ENCODE measurements at regions of chr9 and their contacts with region 1.

Region 1: DNA sequence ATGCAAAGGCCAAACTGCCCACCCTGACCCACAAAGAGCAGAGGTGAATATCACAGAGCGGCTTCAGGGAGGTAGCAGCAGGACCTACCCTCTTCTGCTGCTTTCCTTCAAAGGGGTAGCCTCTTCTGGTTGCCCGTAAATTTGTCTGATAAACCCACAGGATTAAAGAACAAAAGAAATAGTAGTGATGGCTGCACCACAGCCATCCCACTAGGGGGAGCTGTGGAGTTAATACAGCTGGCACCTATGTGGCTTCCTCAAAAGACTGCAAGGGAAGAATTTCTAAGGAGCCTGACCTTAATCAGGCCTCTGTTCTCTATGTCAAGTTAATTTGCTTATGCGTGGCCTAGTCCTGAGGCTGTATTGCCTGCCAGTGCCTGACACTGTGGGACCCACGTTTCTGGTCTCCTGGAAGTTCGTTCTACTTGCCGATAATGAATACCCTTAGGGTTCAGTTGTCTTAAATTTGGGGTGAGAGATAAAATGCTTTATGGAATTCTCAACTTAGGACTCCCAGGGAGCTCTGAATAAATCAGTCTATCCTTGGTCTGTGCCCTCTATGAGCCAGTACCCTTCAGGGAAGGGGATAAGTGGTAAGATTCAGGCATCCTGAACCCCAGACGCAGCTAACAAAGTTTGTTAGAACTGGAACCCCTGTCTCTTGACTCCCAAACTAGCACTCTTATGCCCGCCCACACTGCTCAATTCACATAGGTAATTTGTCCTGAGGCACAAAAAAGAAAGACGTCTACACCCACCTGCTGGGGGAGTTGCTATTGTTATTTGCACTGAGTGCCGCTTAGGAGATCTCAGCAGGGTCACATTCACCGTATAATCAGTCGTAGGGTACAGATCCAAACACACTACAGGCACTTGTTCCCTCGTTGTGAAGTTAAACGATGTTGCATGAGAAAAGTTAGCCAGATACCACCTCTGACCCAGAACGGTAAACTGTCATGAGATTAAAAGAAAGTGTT is 77.1 kb downstream of the SUSD1 start:
- DNase-seq: peak; percentile 65 to 83 (median 71)
- ATAC-seq: peak; percentile 77
- H3K4me3 ChIP-seq: no peak overlapping the region
- H3K27ac ChIP-seq: no peak overlapping the region
- H3K4me1 ChIP-seq: peaks cover 8 to 33% of the 10 kb centered on the region in 2 experiments; a peak in 4 of 5 replicates
- H3K27me3 ChIP-seq: no peaks in the 10 kb centered on the region
- CTCF ChIP-seq: peak; percentile 80 to 90 (median 82)
- EP300 ChIP-seq: no peak
- POLR2A ChIP-seq: no peak
- RAD21 ChIP-seq: peak; percentile 61 to 76

Region 2: GRCh38 chr9:112037281-112038016 is 60.6 kb before region 1 on chr9:
- CTCF ChIA-PET with region 1: no interaction called
- POLR2A ChIA-PET with region 1: no interaction called
- in situ Hi-C with region 1: no loop called
- intact Hi-C with region 1: no loop called
- DNase-seq: no peak
- ATAC-seq: no peak
- H3K4me3 ChIP-seq: no peak overlapping the region
- H3K27ac ChIP-seq: 0 out of 3 replicates have a peak overlapping the region, but pooled peaks have one; percentile 29
- H3K4me1 ChIP-seq: peaks cover 7 to 11% of the 10 kb centered on the region in 2 experiments; a peak in 3 of 5 replicates
- H3K27me3 ChIP-seq: no peaks in the 10 kb centered on the region
- CTCF ChIP-seq: no peak
- EP300 ChIP-seq: no peak
- POLR2A ChIP-seq: no peak
- RAD21 ChIP-seq: no peak

Region 3: GRCh38 chr9:112174218-112174964 is 76.4 kb after region 1 on chr9:
- CTCF ChIA-PET with region 1: no interaction called
- POLR2A ChIA-PET with region 1: interaction called, 3 read pairs
- in situ Hi-C with region 1: no loop called
- intact Hi-C with region 1: loop called (anchors 5 kb)
- DNase-seq: peak; percentile 86 to 93 (median 90)
- ATAC-seq: peak; percentile 80
- H3K4me3 ChIP-seq: peak overlapping the region; percentile 60
- H3K27ac ChIP-seq: peak overlapping the region; percentile 99
- H3K4me1 ChIP-seq: peaks cover 54 to 70% of the 10 kb centered on the region in 2 experiments
- H3K27me3 ChIP-seq: no peaks in the 10 kb centered on the region
- CTCF ChIP-seq: no peak
- EP300 ChIP-seq: 0 out of 2 replicates have a peak, but pooled peaks have one; percentile 23
- POLR2A ChIP-seq: peak; percentile 54; the same call in 1 of the 2 replicates
- RAD21 ChIP-seq: no peak

Region 4: GRCh38 chr9:112224401-112225289 is 126.6 kb after region 1 on chr9:
- CTCF ChIA-PET with region 1: no interaction called
- POLR2A ChIA-PET with region 1: no interaction called
- in situ Hi-C with region 1: no loop called
- intact Hi-C with region 1: loop called (anchors 10 kb)
- DNase-seq: peak in 2 of 4 experiments; percentile 65 to 86
- ATAC-seq: peak; percentile 93
- H3K4me3 ChIP-seq: no peak overlapping the region
- H3K27ac ChIP-seq: peak overlapping the region; percentile 91
- H3K4me1 ChIP-seq: peaks cover 0 to 18% of the 10 kb centered on the region in 2 experiments; a peak in 3 of 5 replicates
- H3K27me3 ChIP-seq: no peaks in the 10 kb centered on the region
- CTCF ChIP-seq: no peak
- EP300 ChIP-seq: peak; percentile 82
- POLR2A ChIP-seq: no peak
- RAD21 ChIP-seq: peak in 1 of 2 experiments; percentile 39; a peak in 1 of 4 replicates

Region 5: DNA sequence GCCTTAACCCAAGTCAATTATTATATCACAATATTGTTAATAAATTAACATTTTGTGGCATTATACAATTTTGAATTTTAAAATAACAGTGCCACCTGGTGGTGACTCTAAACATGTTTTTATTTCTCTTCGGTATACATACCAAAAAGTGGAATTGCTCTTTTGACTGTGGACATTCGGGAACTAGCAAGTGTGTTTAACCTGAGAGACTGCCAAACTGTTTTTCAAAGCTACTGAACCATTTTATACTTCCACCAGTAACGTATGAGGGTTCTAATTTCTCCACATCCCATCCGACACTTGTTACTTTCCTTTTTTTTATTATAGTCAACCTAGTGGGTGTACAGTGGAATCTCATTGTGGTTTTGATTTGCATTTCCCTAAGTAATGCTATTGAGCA is 263.6 kb after region 1 on chr9:
- CTCF ChIA-PET with region 1: interaction called, 8 read pairs
- POLR2A ChIA-PET with region 1: interaction called, 4 read pairs
- in situ Hi-C with region 1: no loop called
- intact Hi-C with region 1: loop called (anchors 2 kb)
- DNase-seq: peak in 2 of 4 experiments; percentile 18 to 59
- ATAC-seq: peak; percentile 80
- H3K4me3 ChIP-seq: no peak overlapping the region
- H3K27ac ChIP-seq: no peak overlapping the region
- H3K4me1 ChIP-seq: no peaks in the 10 kb centered on the region
- H3K27me3 ChIP-seq: no peaks in the 10 kb centered on the region
- CTCF ChIP-seq: peak; percentile 34 to 72 (median 36); a peak in 3 of 6 replicates
- EP300 ChIP-seq: no peak
- POLR2A ChIP-seq: no peak
- RAD21 ChIP-seq: peak; percentile 68 to 88

Region 6: DNA sequence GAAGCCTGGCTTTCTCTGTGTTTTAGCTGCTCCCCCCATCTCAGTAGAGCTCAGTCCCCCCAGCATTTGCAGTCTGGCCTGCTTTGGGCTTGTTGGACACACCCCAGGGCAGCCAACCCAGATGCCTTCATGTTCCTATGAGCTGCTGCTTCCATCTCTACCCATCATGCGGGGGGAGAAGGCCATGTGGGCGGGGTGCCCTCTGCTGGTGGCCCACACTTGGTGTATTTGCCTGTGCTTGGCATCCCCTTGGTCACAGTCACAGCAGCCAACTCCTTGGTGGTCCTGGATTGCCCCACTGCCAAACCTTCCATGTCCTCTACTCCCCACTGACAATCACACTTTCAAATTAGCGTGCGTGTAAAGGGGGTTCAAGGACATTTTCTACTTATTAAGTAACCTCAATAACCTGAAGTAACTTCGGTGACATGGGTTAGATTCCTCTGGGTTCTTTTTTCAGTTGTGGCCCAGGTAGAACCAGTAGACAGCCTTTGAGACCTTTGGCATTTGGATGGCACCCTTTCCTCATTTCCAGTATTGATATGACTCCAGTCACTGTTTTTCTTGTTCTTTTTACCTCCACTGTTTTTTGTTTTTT is 695.3 kb after region 1 on chr9:
- CTCF ChIA-PET with region 1: no interaction called
- POLR2A ChIA-PET with region 1: no interaction called
- in situ Hi-C with region 1: no loop called
- intact Hi-C with region 1: loop called (anchors 10 kb)
- DNase-seq: peak; percentile 49 to 78 (median 58)
- ATAC-seq: peak; percentile 96
- H3K4me3 ChIP-seq: no peak overlapping the region
- H3K27ac ChIP-seq: no peak overlapping the region
- H3K4me1 ChIP-seq: no peaks in the 10 kb centered on the region; a peak in 2 of 5 replicates
- H3K27me3 ChIP-seq: peaks cover 0 to 5% of the 10 kb centered on the region in 2 experiments; a peak in 1 of 5 replicates
- CTCF ChIP-seq: peak; percentile 80 to 88 (median 83)
- EP300 ChIP-seq: no peak
- POLR2A ChIP-seq: no peak
- RAD21 ChIP-seq: peak; percentile 76 to 88

Region 7: GRCh38 chr9:112819635-112820496 is 721.9 kb after region 1 on chr9:
- CTCF ChIA-PET with region 1: no interaction called
- POLR2A ChIA-PET with region 1: no interaction called
- in situ Hi-C with region 1: loop called (anchors 25 kb)
- intact Hi-C with region 1: no loop called
- DNase-seq: peak; percentile 32 to 69 (median 52)
- ATAC-seq: peak; percentile 98
- H3K4me3 ChIP-seq: no peak overlapping the region
- H3K27ac ChIP-seq: no peak overlapping the region
- H3K4me1 ChIP-seq: no peaks in the 10 kb centered on the region
- H3K27me3 ChIP-seq: no peaks in the 10 kb centered on the region; a peak in 1 of 5 replicates
- CTCF ChIP-seq: peak; percentile 68 to 80 (median 75)
- EP300 ChIP-seq: no peak
- POLR2A ChIP-seq: no peak
- RAD21 ChIP-seq: peak; percentile 62 to 84

Measured in K562 (cell line).